ENCODE measurements at regions of chr1 and their contacts with region 1.

Region 1: GRCh38 chr1:42924082-42924850 is 34.4 kb downstream of the SLC2A1 start:
- DNase-seq: peak; percentile 89
- H3K4me3 Mint-ChIP-seq: peak overlapping the region; percentile 80
- H3K27ac Mint-ChIP-seq: peak overlapping the region; percentile 93
- H3K4me1 Mint-ChIP-seq: peaks cover 35% of the 10 kb centered on the region
- H3K27me3 Mint-ChIP-seq: no peaks in the 10 kb centered on the region

Region 2: GRCh38 chr1:42777852-42778251 is 146.4 kb before region 1 on chr1:
- intact Hi-C with region 1: loop called (anchors 2 kb)
- DNase-seq: no peak
- H3K4me3 Mint-ChIP-seq: no peak overlapping the region
- H3K27ac Mint-ChIP-seq: no peak overlapping the region
- H3K4me1 Mint-ChIP-seq: peaks cover 42% of the 10 kb centered on the region
- H3K27me3 Mint-ChIP-seq: no peaks in the 10 kb centered on the region

Region 3: DNA sequence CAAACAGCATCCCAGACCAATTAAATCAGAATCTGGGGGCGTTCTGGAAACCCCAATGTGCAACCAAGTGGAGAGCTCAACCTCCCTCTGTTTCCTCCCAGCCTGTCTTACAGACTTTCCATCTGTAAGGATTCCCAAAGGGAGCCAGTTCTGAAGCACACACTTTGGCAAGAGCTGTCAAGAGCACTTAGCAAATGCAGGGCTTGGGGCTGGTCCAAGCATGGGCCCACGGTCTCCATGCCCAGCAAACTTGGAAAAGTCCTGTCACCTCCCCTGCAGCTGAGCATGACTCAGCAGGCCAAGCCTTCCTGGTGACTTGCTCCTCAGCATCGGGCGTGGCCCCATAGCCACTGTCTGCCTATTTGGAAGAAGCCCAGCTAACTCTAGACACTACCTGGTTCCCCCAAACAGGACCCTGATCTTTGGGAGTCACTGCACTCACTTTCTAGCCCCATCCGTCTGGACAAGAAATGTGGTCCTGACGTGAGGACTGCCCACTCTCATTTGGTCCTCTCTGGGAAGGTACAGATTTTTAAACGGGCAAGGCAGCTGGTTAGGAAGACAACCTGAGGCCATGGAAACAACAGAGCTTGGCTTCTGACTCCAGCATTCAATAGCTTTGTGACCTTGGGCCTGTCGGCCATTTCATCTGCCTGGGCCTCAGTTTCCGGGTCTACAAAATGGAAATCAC is 17.5 kb after region 1 on chr1:
- intact Hi-C with region 1: loop called (anchors 2 kb)
- DNase-seq: no peak
- H3K4me3 Mint-ChIP-seq: peak overlapping the region; percentile 37
- H3K27ac Mint-ChIP-seq: peak overlapping the region; percentile 93
- H3K4me1 Mint-ChIP-seq: peaks cover 90% of the 10 kb centered on the region
- H3K27me3 Mint-ChIP-seq: no peaks in the 10 kb centered on the region